Vagina (tissue), 2 donors: ENCODE measurements at regions of chr16 and their contacts with region 1.

Region 1: DNA sequence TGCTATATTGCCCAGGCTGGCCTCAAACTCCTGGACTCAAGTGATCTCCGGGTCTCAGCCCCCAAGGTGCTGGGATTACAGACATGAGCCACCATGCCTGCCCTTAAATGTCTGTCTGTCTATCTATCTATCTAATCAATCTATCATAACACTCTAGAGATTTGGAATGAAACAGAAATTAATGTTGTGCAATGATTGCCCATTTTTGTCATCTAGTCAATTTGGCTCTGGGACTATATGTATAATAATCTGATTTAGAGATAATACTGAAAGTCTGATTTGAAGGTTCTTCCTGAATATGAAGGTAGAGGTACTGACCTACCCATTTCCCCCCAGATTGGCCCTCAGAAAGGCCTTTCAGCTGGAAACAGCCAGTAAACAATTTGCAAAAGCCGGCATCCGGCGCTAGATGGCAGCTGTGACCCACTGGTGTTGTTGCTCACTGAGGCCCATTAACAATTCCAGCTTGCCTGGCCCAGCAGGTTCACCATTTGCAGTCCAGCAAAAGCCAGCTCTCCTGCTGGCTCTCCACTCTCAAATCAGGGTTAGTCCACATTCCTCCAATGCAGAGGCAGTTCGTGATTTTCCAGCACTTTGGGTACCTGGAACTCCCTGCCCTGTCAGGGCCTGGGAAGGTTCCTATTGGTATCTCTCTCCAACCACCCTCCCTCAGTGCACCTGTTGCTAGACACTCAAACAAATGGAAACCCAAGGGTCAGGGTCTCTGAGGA is 22.9 kb upstream of the C16orf87 start:
- DNase-seq: no peak
- H3K4me3 ChIP-seq: no peak overlapping the region
- H3K27ac ChIP-seq: no peak overlapping the region
- H3K4me1 ChIP-seq: no peaks in the 10 kb centered on the region
- H3K27me3 ChIP-seq: no peaks in the 10 kb centered on the region
- CTCF ChIP-seq: peak; percentile 47 to 61 (median 58)
- POLR2A ChIP-seq: no peak

Region 2: DNA sequence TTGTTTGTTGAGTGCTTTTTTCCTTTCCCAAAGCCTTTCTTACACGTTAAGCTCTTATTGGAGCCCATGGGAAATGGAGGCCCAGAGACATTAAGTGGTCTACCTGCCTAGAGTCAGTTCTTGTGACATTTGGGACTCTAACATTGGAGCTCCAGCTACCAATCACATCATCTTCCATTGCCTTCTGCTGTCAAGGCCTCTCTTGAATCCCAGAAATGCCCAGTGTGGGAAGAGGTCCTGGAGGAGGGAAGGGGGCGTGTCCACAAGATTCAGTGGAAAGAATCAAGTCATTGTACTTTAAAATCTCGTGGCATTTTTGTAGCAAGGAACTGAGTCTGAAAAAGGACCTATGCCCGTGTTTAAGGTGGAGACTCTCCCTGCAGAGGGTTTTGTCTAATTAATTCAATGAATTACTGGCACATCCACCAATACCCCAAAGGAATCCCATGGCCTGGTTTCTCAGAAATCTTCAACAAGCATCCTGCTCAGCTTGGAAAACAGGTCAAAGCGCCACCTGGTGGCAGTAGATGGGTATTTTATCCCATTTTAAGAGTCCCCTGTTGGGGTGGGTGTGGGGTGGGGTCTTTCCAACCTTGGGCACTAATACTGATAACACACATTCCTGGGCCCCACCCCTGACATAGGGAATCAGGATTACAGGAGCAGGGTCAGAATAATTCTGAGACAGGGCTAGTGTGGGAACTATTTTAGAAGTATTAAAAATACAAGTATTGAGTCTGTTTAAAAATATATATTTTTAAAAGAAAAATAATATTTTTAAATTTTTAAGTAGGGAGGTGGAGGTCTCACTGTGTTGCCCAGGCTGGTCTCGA is 54.9 kb after region 1 on chr16:
- intact Hi-C with region 1: loop called (anchors 5 kb)
- DNase-seq: no peak
- H3K4me3 ChIP-seq: no peak overlapping the region
- H3K27ac ChIP-seq: no peak overlapping the region
- H3K4me1 ChIP-seq: no peaks in the 10 kb centered on the region
- H3K27me3 ChIP-seq: no peaks in the 10 kb centered on the region
- CTCF ChIP-seq: peak; percentile 15 to 88 (median 69)
- POLR2A ChIP-seq: no peak